Dendritic cell treated with granulocyte-macrophage colony-stimulating factor and Interleukin-4, amounts not matched to agents 40 ng/mL and 50 ng/mL, for 4 days (primary cell): ENCODE measurements at regions of chr1 and their contacts with region 1.

Region 1: GRCh38 chr1:61077676-61078541 is 4.5 kb upstream of the NFIA start:
- H3K4me3 Mint-ChIP-seq: peak overlapping the region; percentile 90
- H3K27ac Mint-ChIP-seq: peak overlapping the region; percentile 98
- H3K4me1 Mint-ChIP-seq: peaks cover 51% of the 10 kb centered on the region
- H3K27me3 Mint-ChIP-seq: peaks cover 5% of the 10 kb centered on the region

Region 2: DNA sequence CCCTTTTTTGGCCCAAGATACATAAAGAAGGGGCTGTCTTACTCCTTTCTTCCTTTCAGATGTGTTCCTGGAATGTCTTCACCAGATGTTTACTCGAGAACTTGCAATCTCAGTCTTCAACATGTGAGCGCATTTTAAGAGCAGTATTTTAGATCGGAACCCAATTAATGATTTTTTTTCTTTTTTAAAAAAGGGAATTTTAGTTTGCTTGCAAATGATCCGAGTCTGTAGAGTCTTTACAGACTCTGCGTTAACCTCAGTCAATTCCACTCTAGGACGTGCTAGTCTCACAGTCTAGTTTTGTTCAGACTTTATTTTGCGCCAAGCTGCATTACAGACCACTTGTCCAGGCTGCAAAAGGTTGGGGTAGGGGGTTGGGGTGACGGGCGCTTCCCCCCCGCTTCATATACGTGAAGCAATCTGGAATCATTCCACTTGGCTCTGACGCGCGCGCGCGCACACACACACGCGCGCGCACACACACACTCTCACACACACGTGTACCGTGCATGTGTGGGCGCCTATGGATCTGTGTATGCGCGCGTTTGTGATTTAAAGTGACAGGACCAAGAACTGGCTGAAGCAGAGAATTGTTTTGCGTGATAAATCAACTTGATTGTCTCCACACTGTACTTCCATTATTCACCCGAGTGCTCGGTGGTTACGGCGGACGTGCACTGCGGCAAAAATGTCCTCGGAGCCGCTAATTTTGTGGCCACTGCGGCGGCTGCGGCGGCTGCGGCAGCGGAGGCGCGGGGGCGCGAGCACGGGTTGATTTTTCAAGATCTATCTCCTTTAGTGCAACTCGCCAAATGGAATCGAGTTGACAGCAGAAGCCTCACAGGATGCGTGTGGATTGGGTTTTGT is 21.1 kb before region 1 on chr1:
- intact Hi-C with region 1: loop called (anchors 1 kb)
- H3K4me3 Mint-ChIP-seq: peak overlapping the region; percentile 83
- H3K27ac Mint-ChIP-seq: peak overlapping the region; percentile 73
- H3K4me1 Mint-ChIP-seq: peaks cover 21% of the 10 kb centered on the region
- H3K27me3 Mint-ChIP-seq: peaks cover 52% of the 10 kb centered on the region

Region 3: DNA sequence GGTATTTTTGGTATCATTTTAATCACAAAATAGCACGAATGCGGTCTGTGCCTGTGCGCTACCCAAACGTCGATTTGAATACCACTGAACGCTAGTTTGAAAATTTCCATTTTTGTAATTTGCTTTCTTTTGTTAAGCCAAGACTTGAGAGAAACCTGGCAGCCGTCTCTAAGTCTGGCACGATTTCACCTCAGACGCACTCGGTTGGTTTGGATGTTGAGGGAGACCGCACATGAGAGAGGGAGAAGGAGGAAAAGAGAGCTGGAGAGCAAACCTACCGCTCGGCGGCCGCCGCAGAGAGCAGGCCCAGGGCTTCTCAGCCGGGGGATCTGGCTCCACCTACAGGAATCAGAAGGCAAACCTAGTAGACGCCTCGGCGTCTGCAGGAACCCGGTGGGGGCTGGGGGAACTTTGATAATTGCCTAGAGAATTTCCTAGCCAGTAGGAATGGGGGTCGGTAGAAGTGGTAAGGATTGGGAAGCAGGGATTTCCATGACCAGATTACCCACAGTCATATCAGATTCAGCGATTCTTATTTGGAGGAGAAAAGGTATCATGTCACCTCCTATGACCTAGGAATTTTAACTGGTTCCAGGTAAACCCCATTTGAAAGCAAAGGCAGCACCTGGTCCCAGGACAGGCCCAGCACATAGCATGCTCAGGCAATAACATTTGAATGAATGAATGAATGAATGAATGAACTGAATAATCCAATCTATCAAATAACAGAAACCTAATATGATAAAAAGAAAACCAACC is 563.8 kb after region 1 on chr1:
- intact Hi-C with region 1: loop called (anchors 10 kb)
- H3K4me3 Mint-ChIP-seq: peak overlapping the region; percentile 76
- H3K27ac Mint-ChIP-seq: peak overlapping the region; percentile 95
- H3K4me1 Mint-ChIP-seq: peaks cover 43% of the 10 kb centered on the region
- H3K27me3 Mint-ChIP-seq: peaks cover 3% of the 10 kb centered on the region

Region 4: DNA sequence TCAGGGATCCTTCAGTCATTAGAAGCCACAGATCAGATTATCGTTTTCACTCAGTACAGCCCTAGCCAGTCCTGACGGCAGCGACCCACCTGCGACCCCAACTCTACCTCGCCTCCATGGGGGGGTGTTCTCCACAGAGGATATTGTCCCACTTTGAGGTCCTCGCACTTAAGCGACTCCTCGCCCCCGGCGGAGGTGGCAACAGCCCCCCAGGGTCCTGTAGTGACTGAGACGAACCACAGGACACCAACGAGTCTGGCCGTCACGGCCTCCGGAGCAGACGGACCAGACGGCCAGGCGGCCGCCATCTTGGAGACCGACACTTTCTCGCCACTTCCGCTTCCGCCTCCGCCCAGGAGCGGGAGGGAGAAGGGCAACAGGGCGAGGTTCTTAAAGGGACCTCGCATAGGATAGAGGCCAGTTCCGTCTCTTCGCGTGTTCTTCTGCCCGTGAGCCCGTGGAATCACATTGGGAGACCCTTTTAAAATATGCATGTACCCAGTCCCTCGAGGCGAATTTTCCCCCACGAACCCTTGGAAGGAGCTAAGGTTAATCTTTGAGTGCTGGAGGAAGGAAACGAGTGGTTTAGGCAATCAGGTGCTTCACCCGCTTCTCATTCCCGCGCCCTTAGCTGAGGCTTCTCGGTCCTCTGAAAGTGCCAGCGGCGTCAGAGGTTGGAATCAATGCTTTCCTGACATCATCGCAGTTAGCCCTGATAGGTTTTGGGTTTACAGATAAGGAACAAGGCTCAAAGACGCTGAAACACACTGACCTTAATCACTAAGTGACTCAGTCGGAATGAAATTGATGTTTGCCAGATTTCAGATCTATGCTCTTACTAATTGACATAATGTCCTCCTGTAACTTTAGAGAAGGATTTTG is 647.1 kb after region 1 on chr1 and contains the start of gene TM2D1:
- intact Hi-C with region 1: loop called (anchors 2 kb)
- H3K4me3 Mint-ChIP-seq: peak within 1 kb of the TSS; percentile 99
- H3K27ac Mint-ChIP-seq: peak within 1 kb of the TSS; percentile 100
- H3K4me1 Mint-ChIP-seq: peaks cover 17% of the 10 kb centered on the region
- H3K27me3 Mint-ChIP-seq: no peaks in the 10 kb centered on the region

Region 5: GRCh38 chr1:62436466-62437256 is 1358.8 kb after region 1 on chr1 and contains the start of gene USP1:
- intact Hi-C with region 1: loop called (anchors 10 kb)
- H3K4me3 Mint-ChIP-seq: peak within 1 kb of the TSS; percentile 94
- H3K27ac Mint-ChIP-seq: peak within 1 kb of the TSS; percentile 99
- H3K4me1 Mint-ChIP-seq: peaks cover 35% of the 10 kb centered on the region
- H3K27me3 Mint-ChIP-seq: no peaks in the 10 kb centered on the region